ENCODE measurements at regions of chrX and their contacts with region 1.

Region 1: GRCh38 chrX:48891402-48892288 is 5.9 kb downstream of the TIMM17B start:
- DNase-seq: peak; percentile 83 to 90 (median 86)
- H3K4me3 ChIP-seq: peak overlapping the region; percentile 73
- H3K27ac ChIP-seq: peak overlapping the region; percentile 41 to 87
- H3K4me1 ChIP-seq: peaks cover 3% of the 10 kb centered on the region
- H3K27me3 ChIP-seq: no peaks in the 10 kb centered on the region
- CTCF ChIP-seq: peak; percentile 19 to 52 (median 42)
- EP300 ChIP-seq: no peak
- POLR2A ChIP-seq: peak; percentile 62

Region 2: GRCh38 chrX:48813644-48814043 is 78.0 kb before region 1 on chrX:
- intact Hi-C with region 1: loop called in 1 of 4 experiments (anchors 2 kb)
- DNase-seq: no peak
- H3K4me3 ChIP-seq: no peak overlapping the region
- H3K27ac ChIP-seq: no peak overlapping the region
- H3K4me1 ChIP-seq: no peaks in the 10 kb centered on the region
- H3K27me3 ChIP-seq: no peaks in the 10 kb centered on the region
- CTCF ChIP-seq: no peak
- EP300 ChIP-seq: no peak
- POLR2A ChIP-seq: no peak

Region 3: GRCh38 chrX:48854898-48855297 is 36.7 kb before region 1 on chrX:
- intact Hi-C with region 1: no loop called
- DNase-seq: no peak
- H3K4me3 ChIP-seq: no peak overlapping the region
- H3K27ac ChIP-seq: no peak overlapping the region
- H3K4me1 ChIP-seq: no peaks in the 10 kb centered on the region
- H3K27me3 ChIP-seq: no peaks in the 10 kb centered on the region
- CTCF ChIP-seq: no peak
- EP300 ChIP-seq: no peak
- POLR2A ChIP-seq: no peak